A549 (cell line): ENCODE measurements at regions of chr6 and their contacts with region 1.

Region 1: DNA sequence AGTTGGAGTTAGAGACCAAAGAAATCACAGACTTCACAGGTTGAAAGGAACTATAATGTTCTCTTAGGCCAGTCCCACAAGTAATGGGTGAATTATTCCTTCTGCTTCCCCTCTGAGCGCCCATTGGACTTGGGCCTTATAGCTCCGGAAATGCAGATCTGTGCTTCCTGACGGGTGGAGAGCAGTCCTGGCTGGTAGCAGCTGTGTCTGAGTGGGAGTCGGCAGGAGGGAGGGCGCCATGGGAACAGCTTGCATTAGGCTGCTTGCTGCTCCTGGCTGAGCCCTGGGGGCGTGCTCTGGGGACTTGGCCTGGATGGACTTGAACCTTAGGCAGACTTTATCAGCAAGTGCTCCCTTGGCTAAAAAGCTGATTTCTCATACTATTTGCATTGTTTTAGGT is 18.4 kb upstream of the NUP153 start:
- DNase-seq: no peak
- ATAC-seq: no peak
- H3K4me3 ChIP-seq: no peak overlapping the region
- H3K27ac ChIP-seq: no peak overlapping the region
- H3K4me1 ChIP-seq: no peaks in the 10 kb centered on the region
- CTCF ChIP-seq: no peak
- EP300 ChIP-seq: no peak
- POLR2A ChIP-seq: no peak
- RAD21 ChIP-seq: no peak

Region 2: GRCh38 chr6:17200395-17200794 is 524.7 kb before region 1 on chr6:
- CTCF ChIA-PET with region 1: interaction called, 3 read pairs
- POLR2A ChIA-PET with region 1: interaction called, 11 read pairs
- DNase-seq: no peak
- ATAC-seq: 0 out of 6 replicates have a peak, but pooled peaks of 1 of the 2 experiments have one; percentile 31
- H3K4me3 ChIP-seq: no peak overlapping the region
- H3K27ac ChIP-seq: no peak overlapping the region
- H3K4me1 ChIP-seq: no peaks in the 10 kb centered on the region
- CTCF ChIP-seq: no peak
- EP300 ChIP-seq: no peak
- POLR2A ChIP-seq: no peak
- RAD21 ChIP-seq: no peak